Activated T-helper 1 cell treated with anti-CD3 and anti-CD28 coated beads, Interleukin-12 subunit alpha, Interleukin-12 subunit beta, Interleukin-2, Interleukin-4 antibody, amounts not matched to agents 30 ng/mL and 10 ng/mL and 1 ng/mL, durations not matched to agents 14 hours and 24 hours and 36 hours (primary cell): ENCODE measurements at regions of chr3 and their contacts with region 1.

Region 1: GRCh38 chr3:156483961-156484787 is 70.7 kb downstream of the SSR3 start:
- DNase-seq: peak; percentile 56
- H3K4me3 Mint-ChIP-seq: peak overlapping the region; percentile 73
- H3K27ac Mint-ChIP-seq: peak overlapping the region; percentile 86
- H3K4me1 Mint-ChIP-seq: peaks cover 42% of the 10 kb centered on the region
- H3K27me3 Mint-ChIP-seq: peaks cover 6% of the 10 kb centered on the region

Region 2: DNA sequence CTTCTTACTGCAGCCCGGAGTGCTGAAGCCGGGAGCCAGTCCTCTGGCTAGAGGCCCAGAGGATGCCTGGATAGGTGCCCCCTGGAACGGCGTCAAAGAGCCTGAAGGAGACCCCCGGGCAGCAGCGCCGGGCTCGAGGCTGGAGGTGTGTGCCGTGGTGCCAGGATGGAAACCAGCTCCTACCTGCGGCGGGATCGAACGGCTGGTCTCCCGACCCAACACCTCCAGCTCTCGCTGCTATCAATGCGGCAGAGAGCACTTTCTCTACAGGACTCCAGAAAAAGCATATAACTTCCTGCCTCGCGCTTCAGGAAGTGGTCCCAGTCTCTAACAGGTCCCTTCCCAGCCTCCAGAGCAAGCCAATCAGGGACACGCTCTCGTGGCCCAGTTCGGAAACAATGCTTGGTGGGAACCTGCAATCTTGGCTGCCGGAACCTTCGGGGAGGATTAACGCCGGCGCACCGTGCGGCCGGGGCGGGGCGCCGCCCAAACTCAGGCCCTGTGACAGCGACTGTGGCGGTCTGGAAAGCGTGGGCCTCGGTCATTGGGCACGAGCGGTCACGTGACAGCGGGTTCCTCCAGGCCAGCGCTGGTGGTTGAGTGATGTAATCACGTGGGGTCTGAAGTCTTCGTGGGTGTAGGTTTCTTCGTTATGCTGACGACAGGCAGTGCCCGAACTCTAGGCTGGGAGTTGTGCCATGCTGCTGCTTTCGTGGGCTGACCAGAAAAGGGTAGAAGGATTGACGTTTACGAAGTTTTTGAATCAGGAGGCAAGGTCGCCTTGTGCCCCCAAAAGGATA is 629.8 kb before region 1 on chr3 and contains the start of gene SLC33A1:
- intact Hi-C with region 1: loop called (anchors 5 kb)
- DNase-seq: peak; percentile 98
- H3K4me3 Mint-ChIP-seq: peak within 1 kb of the TSS; percentile 91
- H3K27ac Mint-ChIP-seq: peak within 1 kb of the TSS; percentile 96
- H3K4me1 Mint-ChIP-seq: peaks cover 36% of the 10 kb centered on the region
- H3K27me3 Mint-ChIP-seq: no peaks in the 10 kb centered on the region
- total RNA-seq, gene SLC33A1: 27.4 and 30.7 TPM in 2 replicates

Region 3: DNA sequence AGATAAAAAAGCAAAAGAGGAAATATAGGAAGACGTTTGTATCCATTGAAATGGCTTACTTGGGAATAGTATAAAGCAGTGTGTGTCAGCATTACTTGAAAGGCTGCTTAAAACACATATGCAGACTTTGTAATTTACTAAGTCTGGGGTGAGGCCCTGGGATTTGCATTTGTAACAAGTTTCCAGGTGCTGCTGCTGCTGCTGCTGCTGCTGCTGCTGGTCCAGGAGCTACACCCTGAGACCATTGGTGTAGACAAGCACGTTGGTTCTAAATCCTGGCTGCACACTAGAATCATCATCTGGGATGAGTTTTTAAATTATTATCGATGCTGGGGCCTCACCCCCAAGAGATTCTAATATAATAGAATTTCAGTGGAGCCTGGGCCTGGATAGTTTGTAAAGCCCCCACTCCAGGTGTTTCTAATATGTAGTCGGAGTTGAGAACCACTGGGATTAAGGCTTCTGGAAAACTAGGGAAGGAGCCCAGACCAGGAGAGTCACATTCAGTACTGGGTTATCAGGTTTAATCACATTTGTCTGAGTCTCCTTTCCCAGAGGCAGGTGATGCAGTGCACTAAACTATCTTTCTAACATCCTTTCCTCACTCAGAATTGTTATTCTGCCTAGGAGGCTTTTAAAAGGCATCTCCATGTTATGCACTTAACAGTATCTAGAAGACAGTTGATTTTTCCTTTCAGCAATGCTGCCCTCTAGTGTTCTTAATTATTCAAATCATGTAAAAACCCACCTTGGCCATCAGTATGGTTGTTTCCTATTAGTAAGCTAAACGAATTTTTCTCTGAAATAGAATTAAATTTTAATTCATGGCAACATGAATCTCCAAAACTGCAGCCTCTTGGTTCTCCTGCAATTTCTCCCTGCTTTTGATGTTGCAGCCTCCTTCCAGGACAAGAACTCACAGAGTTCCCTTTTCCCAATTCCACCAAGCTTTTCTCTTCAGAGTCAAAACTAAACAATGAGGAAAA is 25.3 kb after region 1 on chr3:
- intact Hi-C with region 1: loop called (anchors 1 kb)
- DNase-seq: no peak
- H3K4me3 Mint-ChIP-seq: no peak overlapping the region
- H3K27ac Mint-ChIP-seq: no peak overlapping the region
- H3K4me1 Mint-ChIP-seq: peaks cover 14% of the 10 kb centered on the region
- H3K27me3 Mint-ChIP-seq: peaks cover 20% of the 10 kb centered on the region

Region 4: DNA sequence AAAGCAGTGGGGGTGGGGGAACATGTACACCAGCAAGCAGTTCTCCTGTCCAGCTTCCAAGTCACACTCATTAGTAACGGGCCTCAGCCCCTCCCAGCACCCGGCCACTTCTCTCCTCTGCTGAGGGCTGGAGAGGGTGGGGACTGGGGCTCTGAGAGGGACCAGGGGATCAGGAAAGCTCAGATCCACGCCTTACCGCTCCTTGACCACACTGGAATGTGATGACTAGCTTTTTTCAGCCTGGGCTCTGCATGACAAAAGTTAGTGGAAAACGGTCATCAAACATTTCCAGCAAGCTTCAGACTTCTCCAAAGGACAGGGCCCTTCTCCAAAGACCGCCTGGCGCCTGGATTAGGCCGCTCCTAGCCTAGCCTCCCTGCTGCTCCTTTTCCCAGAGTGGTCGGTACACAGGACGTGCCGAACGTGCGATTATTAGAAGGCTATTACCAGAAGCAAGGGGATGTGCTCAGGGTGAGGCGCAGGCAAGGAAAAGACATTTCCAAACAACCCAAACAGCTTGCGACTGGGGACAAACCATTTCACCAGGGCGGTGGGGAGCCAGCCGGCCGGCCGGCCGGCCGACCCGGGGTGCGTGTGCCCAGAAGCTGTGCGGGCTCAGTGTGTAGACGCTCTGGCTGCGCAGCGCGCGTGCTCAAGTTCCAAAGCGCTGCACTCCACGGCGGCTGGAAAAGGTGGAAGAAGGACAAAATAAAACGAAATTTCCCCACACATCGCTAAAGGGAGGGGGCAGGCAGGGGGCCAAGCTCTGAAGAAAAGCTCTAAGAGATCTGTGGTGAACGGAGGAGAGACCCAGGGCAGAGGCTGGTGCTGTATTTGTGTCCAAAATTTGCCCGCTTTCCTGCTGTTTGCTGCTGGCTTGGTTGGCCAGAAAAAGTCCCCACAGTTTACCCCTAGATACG is 121.8 kb after region 1 on chr3:
- intact Hi-C with region 1: loop called (anchors 1 kb)
- DNase-seq: no peak
- H3K4me3 Mint-ChIP-seq: peak overlapping the region; percentile 82
- H3K27ac Mint-ChIP-seq: peak overlapping the region; percentile 29
- H3K4me1 Mint-ChIP-seq: peaks cover 46% of the 10 kb centered on the region
- H3K27me3 Mint-ChIP-seq: peaks cover 11% of the 10 kb centered on the region

Region 5: GRCh38 chr3:157088601-157089454 is 604.7 kb after region 1 on chr3:
- intact Hi-C with region 1: loop called (anchors 1 kb)
- DNase-seq: peak; percentile 93
- H3K4me3 Mint-ChIP-seq: peak overlapping the region; percentile 70
- H3K27ac Mint-ChIP-seq: peak overlapping the region; percentile 93
- H3K4me1 Mint-ChIP-seq: peaks cover 76% of the 10 kb centered on the region
- H3K27me3 Mint-ChIP-seq: no peaks in the 10 kb centered on the region

Region 6: GRCh38 chr3:157159762-157160657 is 675.8 kb after region 1 on chr3 and contains the start of gene CCNL1:
- intact Hi-C with region 1: loop called (anchors 1 kb)
- DNase-seq: peak; percentile 95
- H3K4me3 Mint-ChIP-seq: peak within 1 kb of the TSS; percentile 93
- H3K27ac Mint-ChIP-seq: peak within 1 kb of the TSS; percentile 94
- H3K4me1 Mint-ChIP-seq: peaks cover 64% of the 10 kb centered on the region
- H3K27me3 Mint-ChIP-seq: no peaks in the 10 kb centered on the region
- total RNA-seq, gene CCNL1: 167 and 204 TPM in 2 replicates